ENCODE measurements at regions of chr18 and their contacts with region 1.

Region 1: GRCh38 chr18:6056146-6056932 is 161.0 kb upstream of the TMEM200C start:
- DNase-seq: no peak
- ATAC-seq: no peak
- H3K4me3 ChIP-seq: no peak overlapping the region
- H3K4me3 Mint-ChIP-seq: no peak overlapping the region
- H3K27ac ChIP-seq: no peak overlapping the region
- H3K27ac Mint-ChIP-seq: no peak overlapping the region
- H3K4me1 ChIP-seq: no peaks in the 10 kb centered on the region
- H3K4me1 Mint-ChIP-seq: no peaks in the 10 kb centered on the region
- H3K27me3 ChIP-seq: no peaks in the 10 kb centered on the region
- H3K27me3 Mint-ChIP-seq: no peaks in the 10 kb centered on the region
- CTCF ChIP-seq: no peak

Region 2: DNA sequence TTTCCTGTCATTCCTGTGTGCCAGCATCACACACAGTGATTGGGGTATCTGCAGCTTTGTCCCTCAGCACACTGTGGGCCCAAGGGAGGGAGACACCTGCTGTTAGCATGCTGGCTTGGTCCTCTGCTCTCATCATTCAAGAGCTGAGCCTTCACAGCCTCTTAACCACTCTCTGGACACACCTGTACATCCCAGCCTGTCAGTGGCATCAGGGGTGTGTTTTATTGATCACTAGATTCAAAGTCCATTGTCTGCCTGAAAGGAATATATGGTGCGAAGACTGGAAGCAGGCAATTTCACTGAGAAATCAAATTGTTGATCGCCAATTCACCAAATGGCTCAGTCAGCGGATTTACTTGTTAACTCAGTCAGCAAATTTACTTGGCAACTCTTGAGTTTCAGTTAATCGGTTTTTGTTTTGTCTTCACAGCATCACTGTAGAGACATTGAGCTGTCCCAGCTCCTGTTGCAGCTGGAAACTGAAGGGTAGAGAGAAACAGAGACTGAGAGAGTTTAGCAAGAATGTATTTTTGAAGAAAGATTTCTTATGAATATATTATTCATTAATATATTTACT is 104.7 kb before region 1 on chr18:
- CTCF ChIA-PET with region 1: no interaction called
- POLR2A ChIA-PET with region 1: no interaction called
- intact Hi-C with region 1: no loop called
- DNase-seq: no peak
- ATAC-seq: no peak
- H3K4me3 ChIP-seq: no peak overlapping the region
- H3K4me3 Mint-ChIP-seq: no peak overlapping the region
- H3K27ac ChIP-seq: no peak overlapping the region
- H3K27ac Mint-ChIP-seq: no peak overlapping the region
- H3K4me1 ChIP-seq: no peaks in the 10 kb centered on the region
- H3K4me1 Mint-ChIP-seq: no peaks in the 10 kb centered on the region
- H3K27me3 ChIP-seq: no peaks in the 10 kb centered on the region
- H3K27me3 Mint-ChIP-seq: no peaks in the 10 kb centered on the region
- CTCF ChIP-seq: no peak

Region 3: GRCh38 chr18:5998907-5999306 is 57.4 kb before region 1 on chr18:
- CTCF ChIA-PET with region 1: no interaction called
- POLR2A ChIA-PET with region 1: no interaction called
- intact Hi-C with region 1: loop called (anchors 10 kb)
- DNase-seq: no peak
- ATAC-seq: no peak
- H3K4me3 ChIP-seq: no peak overlapping the region
- H3K4me3 Mint-ChIP-seq: no peak overlapping the region
- H3K27ac ChIP-seq: no peak overlapping the region
- H3K27ac Mint-ChIP-seq: no peak overlapping the region
- H3K4me1 ChIP-seq: no peaks in the 10 kb centered on the region
- H3K4me1 Mint-ChIP-seq: no peaks in the 10 kb centered on the region
- H3K27me3 ChIP-seq: no peaks in the 10 kb centered on the region
- H3K27me3 Mint-ChIP-seq: no peaks in the 10 kb centered on the region
- CTCF ChIP-seq: no peak

Measured in B cell (primary cell).